ENCODE measurements at regions of chr22 and their contacts with region 1.

Region 1: GRCh38 chr22:31148953-31149627 is 8.8 kb upstream of the PLA2G3 start:
- DNase-seq: peak; percentile 53
- H3K4me3 Mint-ChIP-seq: no peak overlapping the region
- H3K27ac Mint-ChIP-seq: no peak overlapping the region
- H3K4me1 Mint-ChIP-seq: no peaks in the 10 kb centered on the region
- H3K27me3 Mint-ChIP-seq: peaks cover 2% of the 10 kb centered on the region

Region 2: DNA sequence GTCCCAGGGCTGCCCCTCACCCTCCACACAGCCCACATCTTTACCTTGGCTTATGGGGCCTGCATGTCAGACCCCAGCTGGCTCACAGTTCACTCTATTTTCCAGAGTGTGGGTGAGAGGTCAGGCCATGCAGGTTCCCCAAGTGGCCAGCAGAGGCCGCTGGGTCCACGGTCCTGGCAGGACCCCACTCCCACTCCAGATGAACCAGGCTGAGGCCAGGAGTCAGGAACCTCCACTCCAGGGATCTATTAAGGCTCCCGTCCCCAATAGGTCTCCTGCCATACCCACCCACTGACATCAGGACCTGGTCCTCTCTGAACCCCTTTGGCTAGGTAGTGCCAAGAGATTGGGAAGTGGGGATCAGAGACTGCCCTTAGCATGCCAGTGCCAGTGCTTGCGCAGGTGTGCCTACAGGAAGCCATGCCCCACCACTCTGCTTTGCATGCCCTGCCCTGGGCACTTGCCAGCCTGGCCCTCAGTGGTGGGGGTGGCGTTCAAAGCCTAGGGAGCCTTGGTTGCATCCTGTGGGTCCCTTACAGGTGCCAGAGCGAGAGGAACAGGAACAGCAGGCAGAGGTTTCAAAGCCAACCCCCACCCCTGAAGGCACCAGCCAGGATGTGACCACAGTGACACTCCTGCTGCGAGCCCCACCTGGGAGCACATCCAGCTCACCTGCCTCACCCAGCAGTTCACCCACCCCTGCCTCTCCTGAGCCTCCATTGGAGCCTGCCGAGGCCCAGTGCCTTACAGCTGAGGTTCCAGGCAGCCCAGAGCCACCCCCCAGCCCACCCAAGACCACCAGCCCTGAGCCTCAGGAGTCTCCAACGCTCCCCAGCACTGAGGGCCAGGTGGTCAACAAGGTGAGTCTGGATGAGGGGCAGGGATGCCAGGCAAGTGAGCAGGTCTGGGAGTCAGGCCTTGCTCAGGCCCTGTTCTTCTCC is 59.7 kb before region 1 on chr22:
- CTCF ChIA-PET with region 1: no interaction called
- POLR2A ChIA-PET with region 1: no interaction called
- intact Hi-C with region 1: loop called (anchors 1 kb)
- DNase-seq: peak; percentile 52
- H3K4me3 Mint-ChIP-seq: no peak overlapping the region
- H3K27ac Mint-ChIP-seq: no peak overlapping the region
- H3K4me1 Mint-ChIP-seq: no peaks in the 10 kb centered on the region
- H3K27me3 Mint-ChIP-seq: no peaks in the 10 kb centered on the region

Measured in activated CD4-positive, alpha-beta memory T cell treated with anti-CD3 and anti-CD28 coated beads for 36 hours (primary cell).